Posterior vena cava (tissue), 2 donors: ENCODE measurements at regions of chr14 and their contacts with region 1.

Region 1: DNA sequence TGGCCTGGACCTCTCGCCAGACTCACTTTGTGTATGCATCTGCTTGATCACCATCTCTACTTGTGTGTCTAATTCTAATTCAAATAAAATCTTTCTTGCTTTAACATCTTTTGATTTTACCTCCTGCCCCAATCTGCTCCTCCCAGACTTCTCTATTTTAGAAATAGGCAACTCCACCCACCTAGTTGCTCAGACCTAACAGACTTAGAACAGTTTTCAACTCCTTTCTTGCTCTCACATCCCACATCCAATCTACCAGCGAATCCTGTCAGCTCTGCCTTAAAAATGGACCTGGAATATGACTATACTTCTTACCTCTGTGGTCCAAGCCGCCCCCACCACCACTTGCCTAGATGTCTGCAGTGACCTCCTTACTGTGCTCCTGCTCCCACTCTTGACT is 18.7 kb downstream of the NRXN3 start:
- DNase-seq: no peak

Region 2: DNA sequence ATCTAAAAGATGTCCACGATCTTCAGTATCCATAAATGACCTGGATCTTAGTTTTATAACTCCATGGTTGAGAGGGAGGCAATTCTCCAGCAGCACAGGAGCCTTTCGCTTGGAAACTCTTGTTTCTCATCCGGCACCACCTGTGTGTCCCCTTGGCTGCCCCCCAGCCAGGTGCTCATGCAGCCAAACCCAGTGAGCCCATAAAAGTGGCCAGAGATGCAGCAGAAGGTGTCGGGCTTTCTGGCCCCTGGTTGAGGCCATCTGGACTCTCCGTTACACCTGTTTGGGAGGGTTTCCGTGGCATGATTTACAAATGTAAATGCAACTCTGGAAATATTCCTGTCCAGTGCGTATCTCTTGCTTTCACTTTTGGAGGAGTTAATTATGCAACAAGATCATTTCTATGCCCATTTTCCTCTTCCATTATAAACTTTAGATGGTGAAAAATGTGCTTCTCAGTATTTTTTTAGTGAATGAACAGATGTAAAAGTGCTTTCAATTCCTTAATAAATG is 1731.4 kb after region 1 on chr14:
- intact Hi-C with region 1: loop called in 1 of 2 experiments (anchors 5 kb)
- DNase-seq: no peak